H1 (cell line): ENCODE measurements at regions of chr17 and their contacts with region 1.

Region 1: GRCh38 chr17:81309070-81309905 is 14.2 kb upstream of the SLC38A10 start:
- DNase-seq: peak in 1 of 2 experiments; percentile 78
- H3K4me3 ChIP-seq: peak overlapping the region in 1 of 4 experiments; percentile 22; a peak in 2 of 8 replicates
- H3K27ac ChIP-seq: no peak overlapping the region
- H3K4me1 ChIP-seq: peaks cover 5 to 18% (median 17%) of the 10 kb centered on the region in 4 experiments
- H3K27me3 ChIP-seq: no peaks in the 10 kb centered on the region
- CTCF ChIP-seq: peak; percentile 24 to 60 (median 47)
- EP300 ChIP-seq: no peak
- POLR2A ChIP-seq: no peak
- RAD21 ChIP-seq: peak; percentile 61 to 73

Region 2: GRCh38 chr17:81294856-81295680 is 14.2 kb before region 1 on chr17 and contains the start of gene SLC38A10:
- CTCF ChIA-PET with region 1: interaction called, 34 read pairs
- POLR2A ChIA-PET with region 1: interaction called, 3 read pairs
- DNase-seq: peak; percentile 21 to 92
- H3K4me3 ChIP-seq: peak within 1 kb of the TSS; percentile 65 to 89 (median 74)
- H3K27ac ChIP-seq: peak within 1 kb of the TSS; percentile 29; the same call in 1 of the 2 replicates
- H3K4me1 ChIP-seq: peaks cover 3 to 6% (median 4%) of the 10 kb centered on the region in 4 experiments; a peak in 5 of 7 replicates
- H3K27me3 ChIP-seq: no peaks in the 10 kb centered on the region
- CTCF ChIP-seq: 0 out of 4 replicates have a peak, but pooled peaks of 1 of the 3 experiments have one; percentile 1
- EP300 ChIP-seq: no peak
- POLR2A ChIP-seq: peak in 1 of 2 experiments; percentile 81; a peak in 2 of 3 replicates
- RAD21 ChIP-seq: no peak
- total RNA-seq, gene SLC38A10: 35.7 and 41.0 TPM in 2 replicates

Region 3: DNA sequence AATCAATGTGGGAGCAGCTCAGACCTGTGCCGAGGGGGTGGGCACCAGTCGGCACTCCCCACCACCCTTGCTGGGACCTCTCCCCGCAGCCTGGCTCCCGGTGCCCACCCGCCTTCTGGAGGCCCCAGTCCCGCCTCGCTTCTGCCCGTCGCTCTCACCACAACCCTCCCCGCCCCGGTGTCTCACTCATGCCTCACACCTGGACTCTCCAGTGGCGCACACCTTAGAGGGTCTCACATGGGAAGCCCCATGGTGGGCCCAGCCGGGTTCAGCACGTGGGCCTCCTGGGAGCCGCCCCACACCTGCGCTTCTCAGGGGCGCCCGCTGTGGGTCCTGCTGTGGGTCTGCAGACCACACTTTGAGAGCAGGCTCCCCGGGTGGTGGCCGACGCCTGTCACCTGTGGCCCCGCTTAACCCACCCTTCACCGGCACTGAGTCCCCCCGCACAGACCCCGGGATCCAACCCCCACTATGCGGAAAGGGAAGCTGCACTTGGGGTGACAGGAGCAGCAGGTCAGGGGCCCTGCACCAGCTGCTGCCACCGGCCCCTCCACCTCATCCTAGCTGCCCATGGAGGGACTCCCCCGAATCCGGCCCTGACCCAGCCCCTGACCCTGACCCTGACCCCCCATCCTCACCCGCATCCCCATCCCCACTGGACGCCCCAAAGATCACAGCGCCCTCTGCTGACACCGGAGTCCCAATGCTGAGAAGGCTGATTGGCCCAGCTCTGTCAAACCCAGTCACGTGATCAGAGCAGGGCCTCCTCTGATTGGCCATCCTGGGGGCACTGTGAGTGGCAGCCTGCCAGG is 13.2 kb after region 1 on chr17:
- CTCF ChIA-PET with region 1: interaction called, 80 read pairs
- POLR2A ChIA-PET with region 1: interaction called, 4 read pairs
- DNase-seq: peak in 1 of 2 experiments; percentile 71
- H3K4me3 ChIP-seq: no peak overlapping the region
- H3K27ac ChIP-seq: no peak overlapping the region
- H3K4me1 ChIP-seq: peaks cover 0 to 6% (median 2%) of the 10 kb centered on the region in 4 experiments; a peak in 5 of 7 replicates
- H3K27me3 ChIP-seq: 0 out of 7 replicates have a peak, but pooled peaks cover 0 to 2% (median 0%) of the 10 kb centered on the region in 4 experiments
- CTCF ChIP-seq: peak; percentile 33 to 69 (median 64)
- EP300 ChIP-seq: no peak
- POLR2A ChIP-seq: no peak
- RAD21 ChIP-seq: peak in 1 of 2 experiments; percentile 38; a peak in 2 of 4 replicates

Region 4: GRCh38 chr17:81335388-81336148 is 26.3 kb after region 1 on chr17:
- CTCF ChIA-PET with region 1: interaction called, 10 read pairs
- POLR2A ChIA-PET with region 1: interaction called, 3 read pairs
- DNase-seq: no peak
- H3K4me3 ChIP-seq: no peak overlapping the region
- H3K27ac ChIP-seq: no peak overlapping the region
- H3K4me1 ChIP-seq: peaks cover 0 to 39% (median 24%) of the 10 kb centered on the region in 4 experiments; a peak in 6 of 7 replicates
- H3K27me3 ChIP-seq: peaks cover 5 to 27% (median 12%) of the 10 kb centered on the region in 4 experiments
- CTCF ChIP-seq: no peak
- EP300 ChIP-seq: no peak
- POLR2A ChIP-seq: no peak
- RAD21 ChIP-seq: no peak

Region 5: GRCh38 chr17:81394921-81395599 is 85.8 kb after region 1 on chr17 and contains the start of gene BAHCC1:
- CTCF ChIA-PET with region 1: interaction called, 11 read pairs
- POLR2A ChIA-PET with region 1: no interaction called
- DNase-seq: peak; percentile 95 to 97
- H3K4me3 ChIP-seq: peak within 1 kb of the TSS; percentile 37 to 65 (median 47)
- H3K27ac ChIP-seq: no peak within 1 kb of the TSS
- H3K4me1 ChIP-seq: peaks cover 6 to 33% (median 27%) of the 10 kb centered on the region in 4 experiments
- H3K27me3 ChIP-seq: peaks cover 43 to 62% (median 55%) of the 10 kb centered on the region in 4 experiments; a peak in 6 of 7 replicates
- CTCF ChIP-seq: 0 out of 4 replicates have a peak, but pooled peaks of 1 of the 3 experiments have one; percentile 1
- EP300 ChIP-seq: no peak
- POLR2A ChIP-seq: no peak
- RAD21 ChIP-seq: no peak
- total RNA-seq, gene BAHCC1: 0.58 and 0.71 TPM in 2 replicates

Region 6: DNA sequence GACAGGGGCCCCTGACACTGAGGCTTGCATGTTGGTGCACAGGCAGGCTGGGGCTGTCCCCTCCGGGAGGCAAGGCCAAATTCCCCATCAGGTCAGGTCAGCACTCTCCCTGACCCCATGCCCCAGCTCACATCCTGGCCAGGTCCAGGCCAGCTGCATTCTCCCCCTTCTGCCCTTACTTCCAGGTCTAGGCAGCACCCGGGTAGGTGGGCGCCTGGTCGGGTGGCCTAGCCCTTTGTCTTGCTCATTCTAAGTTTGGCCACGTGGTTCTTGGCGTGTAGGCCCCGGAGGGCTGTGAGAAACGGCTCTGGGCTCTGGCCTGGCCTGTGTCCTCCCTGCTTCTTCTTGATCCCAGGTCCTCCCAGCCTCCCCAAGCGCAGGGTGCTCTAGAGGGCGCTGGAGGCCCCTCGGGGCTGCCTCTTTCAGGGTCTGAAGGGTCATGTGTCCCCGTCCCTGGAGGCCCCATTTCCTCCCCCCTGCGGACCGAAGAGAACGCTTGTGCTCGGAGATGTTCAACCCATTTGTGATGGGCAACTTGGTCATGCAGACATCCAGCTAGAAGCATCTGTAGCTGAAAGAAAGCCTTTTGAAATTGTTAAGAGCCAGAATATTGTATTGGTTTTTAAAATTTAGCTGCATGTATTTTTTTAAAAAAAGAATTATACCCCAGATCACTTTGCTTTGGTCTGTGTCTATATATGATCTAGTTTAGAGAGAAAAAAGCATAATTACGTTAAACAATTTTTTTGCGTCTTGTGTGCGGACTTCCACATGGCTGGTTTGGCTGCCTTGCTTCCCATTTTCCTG is 92.6 kb after region 1 on chr17:
- CTCF ChIA-PET with region 1: interaction called, 11 read pairs
- POLR2A ChIA-PET with region 1: no interaction called
- DNase-seq: no peak
- H3K4me3 ChIP-seq: peak overlapping the region in 1 of 4 experiments; percentile 56; a peak in 2 of 8 replicates
- H3K27ac ChIP-seq: no peak overlapping the region
- H3K4me1 ChIP-seq: peaks cover 8 to 41% (median 25%) of the 10 kb centered on the region in 4 experiments
- H3K27me3 ChIP-seq: peaks cover 32 to 59% (median 49%) of the 10 kb centered on the region in 4 experiments
- CTCF ChIP-seq: peak; percentile 37 to 58 (median 46)
- EP300 ChIP-seq: no peak
- POLR2A ChIP-seq: no peak
- RAD21 ChIP-seq: peak in 1 of 2 experiments; percentile 22; a peak in 2 of 4 replicates

Region 7: GRCh38 chr17:81428948-81429774 is 119.9 kb after region 1 on chr17:
- CTCF ChIA-PET with region 1: interaction called, 13 read pairs
- POLR2A ChIA-PET with region 1: no interaction called
- DNase-seq: no peak
- H3K4me3 ChIP-seq: no peak overlapping the region
- H3K27ac ChIP-seq: no peak overlapping the region
- H3K4me1 ChIP-seq: peaks cover 0 to 3% (median 0%) of the 10 kb centered on the region in 4 experiments; a peak in 3 of 7 replicates
- H3K27me3 ChIP-seq: no peaks in the 10 kb centered on the region
- CTCF ChIP-seq: no peak
- EP300 ChIP-seq: no peak
- POLR2A ChIP-seq: no peak
- RAD21 ChIP-seq: no peak